Activated T-helper 2 cell treated with anti-CD3 and anti-CD28 coated beads, Interferon-gamma antibody, Interleukin-2, Interleukin-4, amounts not matched to agents 10 μg/mL and 5 μg/mL and 100 μg/mL, durations not matched to agents 14 hours and 24 hours and 36 hours (primary cell): ENCODE measurements at regions of chr16 and their contacts with region 1.

Region 1: DNA sequence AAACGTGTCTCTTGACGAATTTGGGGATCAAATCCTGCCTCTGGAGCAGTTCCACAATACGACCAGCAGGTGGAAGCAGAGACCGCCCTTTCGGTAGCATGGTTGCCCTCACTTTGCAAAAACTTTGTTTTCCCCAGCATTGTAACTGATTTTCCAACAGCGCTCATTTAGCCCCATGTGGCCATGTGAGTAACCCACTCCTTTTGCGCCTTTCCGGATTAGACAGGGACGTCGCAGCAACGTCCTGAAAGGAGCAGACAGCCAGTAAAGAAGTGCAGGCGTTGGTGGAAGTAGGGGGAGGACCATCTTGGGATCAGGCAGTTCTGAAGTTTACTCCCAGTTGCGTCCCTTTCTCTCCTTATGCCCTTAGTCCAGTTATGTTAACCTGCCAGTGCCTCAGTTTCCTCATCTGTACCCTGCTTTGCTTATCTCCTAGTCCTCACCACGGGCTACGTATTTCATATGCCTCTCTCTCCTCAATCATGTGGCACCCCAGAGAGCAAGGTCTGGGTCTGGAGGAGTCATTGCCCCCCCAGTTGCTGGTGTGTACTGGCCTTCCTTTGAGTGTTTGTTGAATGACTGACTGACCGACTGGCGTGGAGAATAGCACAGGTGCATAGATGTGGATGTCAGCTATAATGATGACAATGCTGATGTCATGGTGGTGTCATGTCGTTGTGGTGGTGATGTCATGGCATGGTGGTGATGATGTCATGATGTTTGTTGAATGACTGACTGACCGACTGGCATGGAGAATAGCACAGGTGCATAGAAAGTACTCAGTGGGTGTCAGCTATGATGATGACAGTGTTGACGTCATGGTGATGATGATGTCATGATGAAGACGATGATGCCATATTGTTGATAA is 22.3 kb downstream of the TMEM114 start:
- DNase-seq: peak; percentile 71
- H3K4me3 Mint-ChIP-seq: no peak overlapping the region
- H3K27ac Mint-ChIP-seq: no peak overlapping the region
- H3K4me1 Mint-ChIP-seq: peaks cover 6% of the 10 kb centered on the region
- H3K27me3 Mint-ChIP-seq: no peaks in the 10 kb centered on the region

Region 2: DNA sequence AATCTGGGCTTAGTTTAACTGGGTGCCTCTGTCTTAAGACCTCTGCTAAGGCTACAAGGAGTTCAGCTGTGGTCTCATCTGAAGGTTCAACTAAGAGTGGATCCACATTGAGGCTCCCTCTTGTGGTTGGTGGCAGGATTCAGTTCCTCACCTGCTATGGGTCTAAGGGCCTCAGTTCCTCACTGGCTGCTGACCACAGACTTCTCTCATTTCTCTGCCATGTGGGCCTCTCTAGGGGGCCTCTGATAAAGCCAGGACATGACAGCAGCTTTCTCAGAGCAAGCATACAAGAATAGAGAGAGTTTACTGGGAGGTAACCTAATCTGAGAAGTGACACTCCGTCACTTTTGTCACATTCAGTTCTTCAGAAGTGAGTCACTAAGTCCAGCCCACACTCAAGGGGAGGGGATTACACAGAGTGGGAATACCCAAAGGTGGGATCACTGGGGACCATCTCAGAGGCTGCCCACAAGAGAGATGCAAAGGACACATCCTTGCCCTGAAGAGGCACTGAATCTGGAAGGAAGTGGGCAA is 87.3 kb after region 1 on chr16:
- intact Hi-C with region 1: loop called (anchors 1 kb)
- DNase-seq: peak; percentile 21
- H3K4me3 Mint-ChIP-seq: no peak overlapping the region
- H3K27ac Mint-ChIP-seq: peak overlapping the region; percentile 62
- H3K4me1 Mint-ChIP-seq: peaks cover 14% of the 10 kb centered on the region
- H3K27me3 Mint-ChIP-seq: no peaks in the 10 kb centered on the region